Thyroid gland (tissue), 4 donors: ENCODE measurements at regions of chr2 and their contacts with region 1.

Region 1: DNA sequence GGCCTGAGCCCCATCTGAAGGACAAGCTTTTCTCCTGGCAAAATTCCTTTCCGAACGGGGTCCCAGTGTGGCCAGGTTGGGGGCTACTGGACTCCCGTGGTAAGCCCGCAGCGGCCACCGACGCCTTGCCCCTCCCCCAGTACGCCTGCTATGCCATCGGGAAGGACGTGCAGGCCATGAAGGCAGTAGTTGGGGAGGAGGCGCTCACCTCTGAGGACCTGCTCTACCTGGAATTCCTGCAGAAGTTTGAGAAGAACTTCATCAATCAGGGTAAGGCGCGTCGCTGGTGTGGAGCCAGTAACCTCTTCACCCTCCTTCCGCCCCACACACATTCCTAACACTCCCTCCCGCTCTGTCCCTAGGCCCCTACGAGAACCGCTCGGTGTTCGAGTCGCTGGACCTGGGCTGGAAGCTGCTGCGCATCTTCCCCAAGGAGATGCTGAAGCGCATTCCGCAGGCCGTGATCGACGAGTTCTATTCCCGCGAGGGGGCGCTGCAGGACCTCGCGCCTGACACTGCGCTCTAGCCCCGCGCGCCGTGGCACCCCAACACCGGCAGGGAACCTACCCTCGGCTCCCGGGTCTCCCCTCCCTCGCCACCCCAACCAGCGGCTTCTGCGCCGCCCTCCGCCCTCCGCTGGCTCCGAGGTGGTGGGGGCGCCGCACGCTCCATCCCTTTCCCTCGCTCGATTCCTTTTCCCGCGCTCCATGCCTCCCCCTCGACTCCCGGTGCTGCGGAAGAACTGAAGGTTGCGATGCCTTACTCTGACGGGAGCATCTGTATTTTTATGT is 13.6 kb upstream of the ANKRD53 start:
- DNase-seq: peak; percentile 62 to 68
- H3K4me3 ChIP-seq: peak overlapping the region in 1 of 3 donors; percentile 23
- H3K27ac ChIP-seq: no peak overlapping the region
- H3K4me1 ChIP-seq: peaks cover 0 to 6% of the 10 kb centered on the region in 2 donors
- H3K27me3 ChIP-seq: no peaks in the 10 kb centered on the region
- CTCF ChIP-seq: peak; percentile 55 to 80 (median 70)
- POLR2A ChIP-seq: no peak

Region 2: DNA sequence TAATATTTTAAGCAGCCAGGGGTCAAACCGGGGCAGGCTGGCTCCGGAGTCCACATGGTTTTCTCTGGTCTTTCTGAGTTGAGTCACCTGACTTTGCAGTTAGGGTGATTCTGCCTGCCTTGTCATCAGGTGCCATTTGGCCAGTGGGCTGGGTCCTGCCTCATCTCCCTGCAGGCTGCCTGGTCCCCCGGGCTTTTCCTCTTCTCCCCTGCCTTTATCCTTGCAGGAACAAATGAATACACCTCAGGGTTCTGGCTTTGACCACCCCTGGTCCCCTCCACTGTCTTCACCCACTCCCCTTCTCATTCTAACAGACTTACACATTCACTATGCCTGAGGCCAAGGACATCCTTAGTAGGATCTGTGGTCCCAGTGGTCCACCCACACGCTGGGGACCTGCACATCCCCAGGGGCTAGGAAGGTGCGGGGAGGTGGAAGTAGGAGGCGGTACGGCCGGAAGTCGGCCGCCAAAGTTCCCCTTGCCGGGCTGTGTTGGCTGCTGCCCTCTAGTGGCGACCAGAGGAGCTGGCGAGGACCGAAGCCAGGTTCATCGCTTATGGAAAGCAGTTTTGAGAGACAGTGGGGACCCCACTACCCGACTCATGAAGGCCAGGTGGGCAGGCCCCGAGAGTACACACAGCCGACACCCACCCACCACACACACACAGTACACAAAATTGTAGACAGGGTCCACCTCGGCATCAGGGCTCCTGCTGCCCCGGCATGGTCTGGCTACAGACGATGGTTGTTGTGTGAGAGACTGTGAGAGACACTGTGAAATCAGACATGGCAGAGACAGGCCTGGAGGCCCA is 36.2 kb after region 1 on chr2:
- intact Hi-C with region 1: loop called (anchors 5 kb)
- DNase-seq: peak; percentile 63 to 74
- H3K4me3 ChIP-seq: no peak overlapping the region
- H3K27ac ChIP-seq: no peak overlapping the region
- H3K4me1 ChIP-seq: peaks cover 0 to 7% of the 10 kb centered on the region in 2 donors
- H3K27me3 ChIP-seq: no peaks in the 10 kb centered on the region
- CTCF ChIP-seq: peak; percentile 71 to 96 (median 85)
- POLR2A ChIP-seq: no peak